RWPE1 (cell line): ENCODE measurements at regions of chr21 and their contacts with region 1.

Region 1: DNA sequence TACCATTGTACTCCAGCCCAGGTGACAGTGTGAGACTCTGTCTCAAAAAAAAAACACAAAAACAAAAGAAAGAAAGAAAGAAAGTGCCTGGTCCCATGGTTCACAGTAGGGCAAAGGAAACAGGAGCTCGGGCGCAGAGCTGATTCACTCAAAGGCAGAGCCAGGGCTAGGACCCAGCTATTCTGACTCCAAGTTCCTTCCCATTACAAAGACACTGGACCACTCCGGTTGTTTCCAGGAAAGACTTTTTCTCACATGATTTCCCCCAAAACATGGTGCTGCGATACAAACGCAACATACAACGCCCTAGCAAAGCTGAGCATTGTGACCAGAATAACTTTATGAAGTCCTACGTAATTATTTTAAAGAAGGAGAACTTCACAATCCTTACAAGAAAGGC is 10.7 kb downstream of the ABCG1 start:
- DNase-seq: no peak
- H3K27ac ChIP-seq: peak overlapping the region; percentile 90
- CTCF ChIP-seq: no peak

Region 2: GRCh38 chr21:41933313-41934086 is 296.2 kb before region 1 on chr21:
- CTCF ChIA-PET with region 1: interaction called, 11 read pairs
- POLR2A ChIA-PET with region 1: no interaction called
- DNase-seq: peak; percentile 69
- H3K27ac ChIP-seq: peak overlapping the region; percentile 96
- CTCF ChIP-seq: peak; percentile 70